ENCODE measurements at regions of chr12 and their contacts with region 1.

Region 1: GRCh38 chr12:93167841-93168492 is 209.8 kb upstream of the NUDT4 start:
- DNase-seq: peak; percentile 95
- ATAC-seq: peak; percentile 84
- H3K4me3 ChIP-seq: peak overlapping the region; percentile 69
- H3K27ac ChIP-seq: peak overlapping the region; percentile 88
- H3K4me1 ChIP-seq: peaks cover 32% of the 10 kb centered on the region
- H3K27me3 ChIP-seq: no peaks in the 10 kb centered on the region
- CTCF ChIP-seq: no peak
- EP300 ChIP-seq: peak; percentile 78 to 87; a peak in 3 of 4 replicates
- POLR2A ChIP-seq: no peak
- RAD21 ChIP-seq: peak; percentile 23; the same call in 1 of the 2 replicates

Region 2: DNA sequence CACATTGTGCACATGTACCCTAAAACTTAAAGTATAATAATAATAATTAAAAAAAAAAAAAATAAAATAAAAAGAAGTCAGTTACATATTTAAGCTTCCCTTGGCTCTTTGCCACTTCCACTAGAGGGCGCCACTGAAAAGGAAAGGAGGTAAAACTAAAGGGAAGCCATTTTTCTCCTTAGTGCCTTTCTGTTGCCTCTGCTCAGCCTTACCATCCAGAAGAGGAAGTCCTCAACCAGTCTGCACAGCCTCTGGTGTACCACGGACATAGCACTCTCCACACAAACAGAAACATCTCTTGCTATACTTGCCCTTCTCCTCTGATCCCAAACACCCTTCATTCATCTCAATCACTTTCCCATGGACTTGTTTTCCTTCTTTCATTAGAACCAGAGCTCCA is 69.9 kb before region 1 on chr12:
- CTCF ChIA-PET with region 1: interaction called, 12 read pairs
- POLR2A ChIA-PET with region 1: interaction called, 8 read pairs
- RAD21 ChIA-PET with region 1: interaction called, 43 read pairs
- SMC1A ChIA-PET with region 1: interaction called, 41 read pairs
- in situ Hi-C with region 1: no loop called
- intact Hi-C with region 1: loop called (anchors 2 kb)
- DNase-seq: peak; percentile 51
- ATAC-seq: peak; percentile 80
- H3K4me3 ChIP-seq: no peak overlapping the region
- H3K27ac ChIP-seq: no peak overlapping the region
- H3K4me1 ChIP-seq: peaks cover 20% of the 10 kb centered on the region
- H3K27me3 ChIP-seq: no peaks in the 10 kb centered on the region
- CTCF ChIP-seq: peak; percentile 36 to 54 (median 52)
- EP300 ChIP-seq: no peak
- POLR2A ChIP-seq: no peak
- RAD21 ChIP-seq: peak; percentile 80

Region 3: GRCh38 chr12:93146263-93146939 is 21.6 kb before region 1 on chr12:
- CTCF ChIA-PET with region 1: interaction called, 86 read pairs
- POLR2A ChIA-PET with region 1: interaction called, 4 read pairs
- RAD21 ChIA-PET with region 1: interaction called, 178 read pairs
- SMC1A ChIA-PET with region 1: interaction called, 221 read pairs
- in situ Hi-C with region 1: no loop called
- intact Hi-C with region 1: no loop called
- DNase-seq: no peak
- ATAC-seq: no peak
- H3K4me3 ChIP-seq: no peak overlapping the region
- H3K27ac ChIP-seq: no peak overlapping the region
- H3K4me1 ChIP-seq: no peaks in the 10 kb centered on the region
- H3K27me3 ChIP-seq: no peaks in the 10 kb centered on the region
- CTCF ChIP-seq: no peak
- EP300 ChIP-seq: no peak
- POLR2A ChIP-seq: no peak
- RAD21 ChIP-seq: no peak

Region 4: GRCh38 chr12:93183940-93184671 is 16.1 kb after region 1 on chr12:
- CTCF ChIA-PET with region 1: interaction called, 4 read pairs
- POLR2A ChIA-PET with region 1: interaction called, 7 read pairs
- RAD21 ChIA-PET with region 1: interaction called, 4 read pairs
- SMC1A ChIA-PET with region 1: interaction called, 39 read pairs
- in situ Hi-C with region 1: no loop called
- intact Hi-C with region 1: no loop called
- DNase-seq: peak; percentile 73
- ATAC-seq: peak; percentile 95
- H3K4me3 ChIP-seq: peak overlapping the region; percentile 20; the same call in 1 of the 2 replicates
- H3K27ac ChIP-seq: peak overlapping the region; percentile 86
- H3K4me1 ChIP-seq: peaks cover 25% of the 10 kb centered on the region
- H3K27me3 ChIP-seq: no peaks in the 10 kb centered on the region
- CTCF ChIP-seq: no peak
- EP300 ChIP-seq: peak; percentile 32; a peak in 2 of 4 replicates
- POLR2A ChIP-seq: 0 out of 2 replicates have a peak, but pooled peaks have one; percentile 25
- RAD21 ChIP-seq: no peak

Region 5: DNA sequence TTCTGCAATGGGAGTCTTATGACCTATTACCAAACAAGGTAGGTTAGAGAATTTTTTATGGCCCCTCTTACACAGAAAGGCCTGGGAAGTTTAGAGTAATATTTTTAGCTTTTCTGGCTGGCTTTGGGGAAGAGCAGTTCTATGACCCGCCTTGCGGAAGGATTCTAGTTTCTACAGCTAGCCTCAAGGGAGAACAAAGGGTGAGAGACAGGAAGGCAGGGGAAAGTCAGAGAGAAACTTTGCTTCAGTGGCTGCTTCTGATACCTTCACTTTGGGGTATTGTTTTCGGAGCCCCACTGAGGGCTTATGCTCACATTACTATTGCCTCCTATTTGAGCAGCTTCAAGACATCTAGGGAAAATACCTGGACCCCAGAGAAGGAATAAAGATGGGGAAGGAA is 129.1 kb after region 1 on chr12:
- CTCF ChIA-PET with region 1: interaction called, 3 read pairs
- POLR2A ChIA-PET with region 1: interaction called, 3 read pairs
- RAD21 ChIA-PET with region 1: interaction called, 14 read pairs
- SMC1A ChIA-PET with region 1: interaction called, 7 read pairs
- in situ Hi-C with region 1: no loop called
- intact Hi-C with region 1: no loop called
- DNase-seq: peak; percentile 75
- ATAC-seq: peak; percentile 95
- H3K4me3 ChIP-seq: peak overlapping the region; percentile 25
- H3K27ac ChIP-seq: peak overlapping the region; percentile 73
- H3K4me1 ChIP-seq: peaks cover 17% of the 10 kb centered on the region
- H3K27me3 ChIP-seq: no peaks in the 10 kb centered on the region
- CTCF ChIP-seq: no peak
- EP300 ChIP-seq: no peak
- POLR2A ChIP-seq: no peak
- RAD21 ChIP-seq: 0 out of 2 replicates have a peak, but pooled peaks have one; percentile 13

Region 6: DNA sequence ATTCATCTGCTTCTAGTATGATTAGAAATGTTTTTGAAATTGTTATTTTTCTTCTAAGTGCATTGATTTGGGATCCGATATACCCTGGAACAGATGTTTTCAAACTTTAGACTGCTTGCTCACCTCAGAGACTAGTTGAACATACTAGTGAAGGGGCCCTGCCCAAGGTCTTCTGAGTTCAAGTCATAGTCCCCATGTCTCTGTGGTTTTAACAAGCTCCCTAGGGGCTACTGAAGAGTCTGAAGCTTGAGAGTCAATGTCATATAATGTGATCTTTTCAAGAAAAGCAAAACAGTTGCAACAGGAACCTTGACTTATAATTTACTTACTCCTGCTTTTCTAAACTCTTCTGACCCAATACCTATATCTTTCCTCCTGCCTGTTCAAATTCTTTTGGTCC is 281.3 kb after region 1 on chr12:
- CTCF ChIA-PET with region 1: no interaction called
- POLR2A ChIA-PET with region 1: no interaction called
- RAD21 ChIA-PET with region 1: no interaction called
- SMC1A ChIA-PET with region 1: no interaction called
- in situ Hi-C with region 1: no loop called
- intact Hi-C with region 1: no loop called
- DNase-seq: no peak
- ATAC-seq: peak; percentile 90
- H3K4me3 ChIP-seq: no peak overlapping the region
- H3K27ac ChIP-seq: no peak overlapping the region
- H3K4me1 ChIP-seq: peaks cover 4% of the 10 kb centered on the region; the same call in 1 of the 2 replicates
- H3K27me3 ChIP-seq: no peaks in the 10 kb centered on the region
- CTCF ChIP-seq: no peak
- EP300 ChIP-seq: no peak
- POLR2A ChIP-seq: no peak
- RAD21 ChIP-seq: no peak

Measured in GM12878 (cell line).